ENCODE measurements at regions of chr2 and their contacts with region 1.

Region 1: DNA sequence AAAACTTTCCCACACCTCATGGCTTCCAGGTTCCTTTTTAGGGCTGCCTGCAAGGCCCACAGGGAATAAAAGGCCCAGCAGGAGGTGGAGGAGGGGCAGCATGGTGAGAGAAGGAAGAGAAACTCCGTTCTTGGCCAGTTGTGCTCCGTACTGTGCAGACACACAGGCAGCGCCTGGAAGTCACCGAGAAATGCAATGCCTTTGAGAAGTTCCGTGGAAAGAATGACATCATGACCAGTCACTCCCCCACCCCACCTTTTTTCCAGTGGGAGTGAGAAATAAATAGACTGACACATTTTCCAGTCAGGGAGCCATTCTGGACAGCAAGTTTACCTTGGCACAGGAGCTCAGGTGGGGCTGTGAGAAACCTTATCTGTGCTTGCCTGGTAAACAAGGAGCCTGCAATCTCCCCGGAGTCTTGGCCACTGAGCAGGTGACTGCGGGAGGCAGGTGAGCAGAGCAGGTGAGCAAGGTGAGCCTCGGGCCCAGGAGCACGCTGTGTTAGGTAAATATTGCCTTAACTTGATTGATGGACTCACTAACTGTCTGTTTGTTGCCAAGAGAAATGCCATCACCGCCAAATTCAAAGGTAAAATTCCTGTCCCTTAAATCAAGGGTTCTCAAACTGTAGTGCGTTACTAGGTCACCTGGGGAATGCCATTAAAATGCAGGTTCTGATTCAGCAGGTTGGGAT is 13.5 kb upstream of the LBH start:
- DNase-seq: peak; percentile 94 to 100
- H3K4me3 ChIP-seq: peak overlapping the region; percentile 24; the same call in 1 of the 2 replicates
- H3K27ac ChIP-seq: peak overlapping the region; percentile 81
- H3K4me1 ChIP-seq: peaks cover 49% of the 10 kb centered on the region
- H3K27me3 ChIP-seq: no peaks in the 10 kb centered on the region
- CTCF ChIP-seq: no peak

Region 2: DNA sequence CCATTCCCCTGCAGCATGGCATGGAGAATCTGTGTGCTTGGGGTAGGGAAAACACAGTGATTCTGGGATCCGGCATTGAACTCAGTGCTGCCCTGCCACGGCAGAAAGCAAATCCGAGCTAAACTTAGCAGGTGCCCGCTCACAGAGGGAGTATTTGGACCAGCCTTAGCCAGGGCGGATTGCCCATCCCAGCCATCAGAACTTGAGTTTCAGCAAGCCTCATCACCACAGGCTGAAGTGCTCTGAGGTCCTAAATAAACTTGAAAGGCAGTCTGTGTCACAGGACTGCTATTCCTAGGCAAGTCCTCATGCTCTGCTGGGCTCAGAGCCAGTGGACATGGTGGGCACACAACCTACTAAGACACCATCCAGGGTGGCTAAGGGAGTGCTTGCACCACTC is 157.2 kb before region 1 on chr2:
- CTCF ChIA-PET with region 1: no interaction called
- POLR2A ChIA-PET with region 1: no interaction called
- intact Hi-C with region 1: no loop called
- DNase-seq: no peak
- H3K4me3 ChIP-seq: no peak overlapping the region
- H3K27ac ChIP-seq: no peak overlapping the region
- H3K4me1 ChIP-seq: no peaks in the 10 kb centered on the region
- H3K27me3 ChIP-seq: peaks cover 60% of the 10 kb centered on the region
- CTCF ChIP-seq: no peak

Region 3: DNA sequence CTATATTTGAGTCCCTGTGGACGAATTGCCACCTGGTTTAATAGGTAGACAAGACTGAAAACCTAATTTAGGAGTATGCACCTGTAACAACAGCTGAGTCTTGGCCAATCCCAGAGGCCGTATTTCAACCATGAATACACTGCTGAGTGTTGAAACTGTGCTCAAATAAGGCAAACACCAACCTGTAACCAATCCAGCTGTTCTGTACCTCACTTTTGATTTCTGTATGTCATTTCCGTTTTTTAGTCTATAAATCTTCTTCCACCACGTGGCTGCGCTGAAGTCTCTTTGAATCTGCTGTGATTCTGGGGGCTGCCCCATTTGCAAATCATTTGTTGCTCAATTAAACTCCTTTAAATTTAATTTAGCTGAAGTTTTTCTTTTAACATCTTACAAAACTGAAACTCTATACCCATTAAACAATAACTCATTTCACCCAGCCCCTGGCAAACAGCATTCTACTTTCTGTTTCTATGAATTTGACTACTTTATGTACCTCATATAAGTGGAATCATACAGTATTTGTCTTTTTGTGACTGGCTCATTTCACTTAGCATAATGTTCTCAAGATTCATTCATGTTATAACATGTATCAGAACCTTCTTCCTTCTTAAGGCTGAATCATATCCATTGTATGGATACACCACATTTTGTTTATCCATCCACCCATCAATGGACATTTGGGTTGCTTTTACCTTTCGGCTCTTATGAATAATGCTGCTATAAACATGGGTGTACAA is 78.5 kb before region 1 on chr2:
- CTCF ChIA-PET with region 1: no interaction called
- POLR2A ChIA-PET with region 1: no interaction called
- intact Hi-C with region 1: no loop called
- DNase-seq: no peak
- H3K4me3 ChIP-seq: no peak overlapping the region
- H3K27ac ChIP-seq: no peak overlapping the region
- H3K4me1 ChIP-seq: no peaks in the 10 kb centered on the region
- H3K27me3 ChIP-seq: no peaks in the 10 kb centered on the region
- CTCF ChIP-seq: no peak

Region 4: GRCh38 chr2:30231212-30231995 is 13.6 kb after region 1 on chr2 and contains the start of gene LBH:
- CTCF ChIA-PET with region 1: interaction called, 4 read pairs
- POLR2A ChIA-PET with region 1: interaction called, 12 read pairs
- intact Hi-C with region 1: loop called (anchors 1 kb)
- DNase-seq: peak in 1 of 2 experiments; percentile 34
- H3K4me3 ChIP-seq: no peak within 1 kb of the TSS
- H3K27ac ChIP-seq: no peak within 1 kb of the TSS
- H3K4me1 ChIP-seq: peaks cover 18% of the 10 kb centered on the region
- H3K27me3 ChIP-seq: 0 out of 2 replicates have a peak, but pooled peaks cover 11% of the 10 kb centered on the region
- CTCF ChIP-seq: no peak
- total RNA-seq, gene LBH: 30.6 and 34.4 TPM in 2 replicates

Region 5: DNA sequence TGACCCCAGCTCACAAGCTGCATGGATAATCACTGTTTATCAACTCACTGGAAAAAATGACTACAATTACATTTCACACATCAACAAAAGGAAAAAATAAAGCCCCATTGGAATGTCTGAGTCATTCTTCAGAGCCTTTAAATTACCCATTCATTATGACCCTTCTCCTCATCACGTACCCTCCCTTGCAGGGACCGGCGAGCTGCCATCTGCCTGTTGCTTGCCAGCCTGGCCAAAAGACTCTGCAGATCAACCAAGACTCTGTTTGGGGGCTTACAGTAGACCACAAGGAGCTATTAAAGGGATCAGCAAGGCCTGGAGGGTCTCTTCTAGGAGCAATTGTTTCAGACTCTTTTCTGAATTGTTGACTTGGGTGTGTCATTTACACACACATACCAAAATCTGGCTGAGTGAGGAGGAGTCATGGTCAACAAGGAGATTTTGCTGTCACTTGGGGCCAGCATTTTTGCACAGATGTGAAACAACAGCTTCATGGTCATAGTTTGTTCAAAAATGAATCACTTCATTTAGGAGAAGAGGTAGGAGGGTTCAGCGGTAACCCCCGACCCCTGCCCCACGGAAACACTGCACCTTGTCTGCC is 55.6 kb after region 1 on chr2:
- CTCF ChIA-PET with region 1: interaction called, 4 read pairs
- POLR2A ChIA-PET with region 1: interaction called, 5 read pairs
- intact Hi-C with region 1: loop called (anchors 1 kb)
- DNase-seq: peak; percentile 77 to 91
- H3K4me3 ChIP-seq: peak overlapping the region; percentile 15; the same call in 1 of the 2 replicates
- H3K27ac ChIP-seq: peak overlapping the region; percentile 68
- H3K4me1 ChIP-seq: peaks cover 57% of the 10 kb centered on the region
- H3K27me3 ChIP-seq: no peaks in the 10 kb centered on the region
- CTCF ChIP-seq: no peak

Region 6: GRCh38 chr2:30362468-30363081 is 144.8 kb after region 1 on chr2:
- CTCF ChIA-PET with region 1: no interaction called
- POLR2A ChIA-PET with region 1: no interaction called
- intact Hi-C with region 1: loop called (anchors 2 kb)
- DNase-seq: peak; percentile 45 to 91
- H3K4me3 ChIP-seq: no peak overlapping the region
- H3K27ac ChIP-seq: peak overlapping the region; percentile 73
- H3K4me1 ChIP-seq: peaks cover 35% of the 10 kb centered on the region
- H3K27me3 ChIP-seq: no peaks in the 10 kb centered on the region
- CTCF ChIP-seq: no peak

Region 7: DNA sequence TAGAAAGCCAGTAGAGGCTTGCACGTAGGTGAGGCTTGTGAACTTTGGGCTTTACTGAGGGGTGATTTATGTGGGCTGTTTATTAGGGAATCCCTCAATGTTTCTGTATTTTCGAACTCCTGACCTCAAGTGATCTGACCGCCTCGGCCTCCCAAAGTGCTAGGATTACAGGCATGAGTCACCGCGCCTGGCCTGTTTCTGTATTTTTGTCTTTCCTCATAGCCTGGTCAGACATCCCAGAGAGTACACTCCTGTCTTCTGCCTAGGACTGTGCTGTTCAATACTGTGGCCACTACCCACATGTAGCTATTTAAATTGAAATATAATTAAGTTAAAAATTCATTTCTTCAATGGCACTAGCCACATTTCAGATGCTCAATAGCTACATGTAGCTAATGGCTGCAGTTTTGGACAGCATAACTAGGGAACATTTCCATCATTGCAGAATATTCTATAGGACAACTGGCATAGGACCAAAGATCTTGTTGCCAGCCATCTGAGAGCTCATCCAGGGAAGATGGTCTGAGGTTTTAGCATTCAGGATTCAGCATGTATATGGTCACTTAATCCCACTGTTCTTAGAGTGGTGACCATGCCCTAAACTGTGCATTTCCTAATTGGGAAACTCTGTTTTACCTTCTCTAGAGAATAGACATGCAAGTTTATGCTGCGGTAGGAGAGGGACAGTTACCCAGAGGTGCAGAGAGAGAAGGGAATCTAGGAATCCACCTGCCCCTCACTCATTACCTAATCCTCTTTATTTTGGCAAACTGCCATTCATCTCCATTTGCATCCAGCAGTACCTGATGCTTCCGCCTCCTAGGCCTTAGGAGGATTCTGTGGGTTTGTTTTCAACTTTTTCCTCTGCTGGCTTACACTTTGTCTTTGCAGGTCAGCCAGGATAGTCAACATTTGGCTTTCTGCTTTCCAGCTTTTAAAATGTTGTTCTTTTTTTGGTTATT is 293.6 kb after region 1 on chr2:
- CTCF ChIA-PET with region 1: no interaction called
- POLR2A ChIA-PET with region 1: interaction called, 3 read pairs
- intact Hi-C with region 1: loop called (anchors 5 kb)
- DNase-seq: peak; percentile 47 to 63
- H3K4me3 ChIP-seq: peak overlapping the region; percentile 15; the same call in 1 of the 2 replicates
- H3K27ac ChIP-seq: peak overlapping the region; percentile 56
- H3K4me1 ChIP-seq: peaks cover 55% of the 10 kb centered on the region
- H3K27me3 ChIP-seq: no peaks in the 10 kb centered on the region
- CTCF ChIP-seq: no peak

Region 8: DNA sequence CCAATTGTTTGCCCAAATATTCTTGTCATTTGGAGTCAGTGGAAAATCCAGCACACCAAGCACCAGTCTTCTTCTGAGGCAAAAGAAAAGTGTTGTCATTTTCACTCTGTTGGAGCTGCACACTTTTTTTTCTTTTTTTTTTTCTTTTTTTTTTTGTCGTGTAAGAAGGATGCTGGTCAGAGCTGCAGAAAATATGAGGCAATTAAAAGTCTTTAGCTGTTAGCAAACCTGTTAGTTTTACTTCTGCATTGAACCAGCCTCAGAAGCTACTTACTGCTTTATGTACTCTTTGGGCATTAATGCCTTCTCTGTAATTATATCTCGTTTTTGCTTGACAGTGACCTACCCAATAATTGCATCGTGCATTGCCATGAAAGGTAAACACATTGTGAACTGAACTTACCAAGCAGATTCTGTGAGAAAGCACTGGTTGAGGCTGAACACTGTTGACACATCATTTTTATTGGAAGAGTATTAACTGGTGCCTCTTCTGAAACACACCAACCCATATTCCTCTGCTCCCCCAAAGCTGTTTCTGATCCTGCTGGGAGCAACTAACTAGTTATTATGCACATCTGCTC is 424.1 kb after region 1 on chr2:
- CTCF ChIA-PET with region 1: no interaction called
- POLR2A ChIA-PET with region 1: no interaction called
- intact Hi-C with region 1: no loop called
- DNase-seq: no peak
- H3K4me3 ChIP-seq: no peak overlapping the region
- H3K27ac ChIP-seq: no peak overlapping the region
- H3K4me1 ChIP-seq: no peaks in the 10 kb centered on the region
- H3K27me3 ChIP-seq: no peaks in the 10 kb centered on the region
- CTCF ChIP-seq: no peak